Adrenal gland (tissue), 19 donors: ENCODE measurements at regions of chr19 and their contacts with region 1.

Region 1: DNA sequence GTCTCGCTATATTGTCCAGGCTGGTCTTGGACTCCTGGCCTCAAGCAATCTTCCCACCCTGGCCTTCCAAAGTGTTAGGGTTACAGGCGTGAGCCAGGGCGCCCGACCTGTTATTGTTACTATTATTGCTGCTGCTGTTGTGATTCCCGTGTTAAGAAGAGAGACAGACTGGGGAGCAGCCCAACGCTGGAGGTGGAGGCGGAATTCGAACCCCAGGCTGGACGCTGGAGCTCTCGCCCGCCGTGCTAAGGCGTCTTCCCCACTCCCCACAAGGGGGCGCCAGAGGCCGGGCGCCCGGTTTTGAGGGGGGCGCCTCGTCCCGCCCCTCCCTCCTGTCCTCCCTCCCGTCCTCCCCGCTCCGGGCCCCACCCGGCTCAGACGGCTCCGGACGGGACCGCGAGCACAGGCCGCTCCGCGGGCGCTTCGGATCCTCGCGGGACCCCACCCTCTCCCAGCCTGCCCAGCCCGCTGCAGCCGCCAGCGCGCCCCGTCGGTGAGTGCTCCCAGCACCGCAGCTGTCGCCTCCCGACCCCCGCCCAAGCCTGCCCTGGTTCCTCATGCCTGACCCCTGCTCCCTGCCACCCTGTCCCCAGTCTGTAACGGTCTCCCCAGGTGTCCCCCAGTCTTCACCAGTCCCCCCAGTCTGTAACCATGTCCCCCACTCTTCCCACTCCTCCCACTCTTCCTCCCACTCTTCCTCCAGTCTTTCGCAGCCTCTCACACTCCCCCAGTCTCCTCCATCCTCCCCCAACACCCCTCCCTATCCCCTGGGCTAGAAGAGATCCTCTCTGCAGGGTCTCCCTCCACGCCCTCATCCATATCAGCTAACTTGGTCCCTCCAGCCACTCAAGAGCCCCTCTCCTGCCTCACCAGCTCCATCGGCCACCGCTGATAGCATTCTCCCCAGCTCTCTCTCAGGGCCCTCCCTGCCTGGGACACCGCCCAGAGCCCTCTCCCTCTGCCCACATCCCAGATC is at the start of gene EHD2:
- DNase-seq: peak; percentile 68 to 82 (median 71)
- H3K4me3 ChIP-seq: peak within 1 kb of the TSS; percentile 26 to 78 (median 54)
- H3K27ac ChIP-seq: peak within 1 kb of the TSS; percentile 21 to 86 (median 77)
- H3K4me1 ChIP-seq: peaks cover 19 to 20% of the 10 kb centered on the region in 2 donors
- H3K27me3 ChIP-seq: no peaks in the 10 kb centered on the region
- CTCF ChIP-seq: peak; percentile 88 to 99 (median 96)
- POLR2A ChIP-seq: peak; percentile 29 to 73
- total RNA-seq, gene EHD2: 5.8 to 170 (median 120) TPM

Region 2: GRCh38 chr19:47742634-47743033 is 29.3 kb after region 1 on chr19:
- intact Hi-C with region 1: loop called in 1 of 2 experiments (anchors 2 kb)
- DNase-seq: peak in 1 of 7 donors; percentile 64
- H3K4me3 ChIP-seq: peak overlapping the region in 1 of 4 donors; percentile 36
- H3K27ac ChIP-seq: peak overlapping the region; percentile 51 to 98 (median 95)
- H3K4me1 ChIP-seq: peaks cover 25 to 27% of the 10 kb centered on the region in 2 donors
- H3K27me3 ChIP-seq: no peaks in the 10 kb centered on the region
- CTCF ChIP-seq: no peak
- POLR2A ChIP-seq: no peak

Region 3: GRCh38 chr19:47786566-47786965 is 73.2 kb after region 1 on chr19:
- intact Hi-C with region 1: loop called in 1 of 2 experiments (anchors 5 kb)
- DNase-seq: no peak
- H3K4me3 ChIP-seq: no peak overlapping the region
- H3K27ac ChIP-seq: no peak overlapping the region
- H3K4me1 ChIP-seq: no peaks in the 10 kb centered on the region
- H3K27me3 ChIP-seq: no peaks in the 10 kb centered on the region
- CTCF ChIP-seq: no peak
- POLR2A ChIP-seq: no peak